Activated CD4-positive, alpha-beta T cell treated with anti-CD3 and anti-CD28 coated beads, Interleukin-2, amount 10 ng/mL, durations not matched to agents 7 days and 5 days (primary cell): ENCODE measurements at regions of chr4 and their contacts with region 1.

Region 1: GRCh38 chr4:110211007-110211769 is 12.8 kb upstream of the ELOVL6 start:
- DNase-seq: peak; percentile 45
- H3K4me3 Mint-ChIP-seq: no peak overlapping the region
- H3K27ac Mint-ChIP-seq: no peak overlapping the region
- H3K4me1 Mint-ChIP-seq: peaks cover 3% of the 10 kb centered on the region
- H3K27me3 Mint-ChIP-seq: peaks cover 7% of the 10 kb centered on the region

Region 2: GRCh38 chr4:109803924-109804571 is 407.1 kb before region 1 on chr4:
- CTCF ChIA-PET with region 1: no interaction called
- POLR2A ChIA-PET with region 1: no interaction called
- DNase-seq: no peak
- H3K4me3 Mint-ChIP-seq: no peak overlapping the region
- H3K27ac Mint-ChIP-seq: no peak overlapping the region
- H3K4me1 Mint-ChIP-seq: no peaks in the 10 kb centered on the region
- H3K27me3 Mint-ChIP-seq: peaks cover 6% of the 10 kb centered on the region

Region 3: DNA sequence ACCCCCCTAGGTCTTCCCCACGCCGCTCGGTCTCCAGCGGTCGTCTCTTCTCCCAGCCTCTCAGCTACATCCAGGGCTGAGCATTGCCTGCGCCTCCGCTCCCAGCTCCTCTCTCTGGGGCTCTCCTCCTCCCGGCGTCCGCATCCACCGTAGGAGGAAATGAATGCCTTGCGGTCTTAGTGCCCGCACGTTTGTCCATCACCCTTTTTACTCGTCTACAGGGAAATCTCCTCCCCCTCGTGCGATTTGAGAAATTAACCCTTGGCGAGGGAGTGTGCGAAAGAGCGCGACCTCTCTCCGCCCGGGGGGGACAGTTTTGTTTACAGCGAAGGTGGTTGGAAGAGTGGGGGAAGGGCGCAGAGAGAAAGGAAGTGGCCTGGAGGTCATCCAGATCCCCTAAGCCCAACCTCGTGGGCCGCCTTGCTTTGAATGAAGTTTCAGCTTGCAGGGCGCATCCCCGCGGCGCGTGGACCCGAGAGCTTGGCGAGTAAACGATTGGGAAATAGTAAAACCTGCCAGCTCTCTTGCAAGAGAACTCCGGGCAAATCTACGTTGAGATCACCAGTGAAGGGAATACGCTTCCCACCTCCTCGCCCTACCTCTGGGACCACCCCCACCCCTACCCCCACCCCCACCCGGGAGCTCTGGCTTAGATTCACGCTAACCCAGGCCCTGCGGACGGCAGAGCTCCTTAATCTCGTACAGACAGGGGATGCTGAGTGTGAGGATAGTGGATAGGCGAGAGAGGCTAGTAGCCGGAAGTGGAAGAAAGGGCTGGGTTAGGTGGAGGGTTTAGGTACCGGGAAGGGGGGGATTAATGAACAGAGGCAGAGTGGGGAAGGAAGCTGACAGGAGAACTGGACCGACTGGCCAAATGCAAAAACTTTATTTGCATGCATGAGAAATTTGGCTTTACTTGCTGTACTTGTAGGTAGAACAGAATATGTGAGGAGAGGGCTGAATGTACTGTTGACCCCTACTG is 12.5 kb before region 1 on chr4 and contains the start of gene ELOVL6:
- CTCF ChIA-PET with region 1: no interaction called
- POLR2A ChIA-PET with region 1: no interaction called
- DNase-seq: peak; percentile 38
- H3K4me3 Mint-ChIP-seq: peak within 1 kb of the TSS; percentile 99
- H3K27ac Mint-ChIP-seq: peak within 1 kb of the TSS; percentile 97
- H3K4me1 Mint-ChIP-seq: peaks cover 27% of the 10 kb centered on the region
- H3K27me3 Mint-ChIP-seq: no peaks in the 10 kb centered on the region
- total RNA-seq, gene ELOVL6: 14.7 to 16.0 TPM

Region 4: DNA sequence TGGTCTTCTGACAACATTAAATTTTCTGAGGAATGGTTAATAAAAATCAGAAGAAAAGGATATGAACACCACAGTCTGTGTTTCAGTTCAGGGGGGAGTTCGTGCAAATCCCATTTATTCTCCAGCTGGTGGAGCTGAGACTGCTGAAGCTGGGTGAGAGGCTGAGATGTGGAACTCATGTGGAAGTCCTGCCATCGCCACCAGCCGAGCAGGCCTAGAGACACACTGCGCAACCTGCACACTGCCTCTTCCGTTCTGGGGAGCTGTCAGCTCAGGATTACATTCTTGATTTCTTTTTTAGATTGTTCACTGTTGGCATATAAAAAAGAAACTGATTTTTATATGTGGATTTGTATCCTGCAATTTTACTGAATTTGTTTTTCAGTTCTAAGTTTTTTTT is 53.8 kb after region 1 on chr4:
- CTCF ChIA-PET with region 1: no interaction called
- POLR2A ChIA-PET with region 1: interaction called, 10 read pairs
- DNase-seq: no peak
- H3K4me3 Mint-ChIP-seq: no peak overlapping the region
- H3K27ac Mint-ChIP-seq: no peak overlapping the region
- H3K4me1 Mint-ChIP-seq: peaks cover 11% of the 10 kb centered on the region
- H3K27me3 Mint-ChIP-seq: peaks cover 16% of the 10 kb centered on the region